ENCODE measurements at regions of chr16 and their contacts with region 1.

Region 1: DNA sequence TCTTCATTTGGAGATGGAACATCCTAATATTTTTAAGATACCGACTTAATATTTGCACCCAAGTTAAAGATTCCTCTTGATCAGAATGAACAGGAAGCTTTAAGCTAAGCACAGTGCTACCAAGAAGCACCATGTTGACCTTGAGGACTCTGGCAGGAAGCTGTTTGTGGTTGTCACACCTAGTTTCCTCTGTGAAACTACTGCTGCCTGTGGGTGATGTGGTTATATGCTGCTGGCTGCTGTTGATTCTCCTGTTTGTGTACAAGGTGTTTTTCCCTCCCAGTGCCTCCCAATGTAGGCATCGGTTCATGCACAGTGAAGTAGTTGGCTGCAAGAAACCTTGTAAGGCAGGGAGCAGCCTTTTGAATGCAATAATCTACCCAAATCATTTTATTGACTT is 23.4 kb downstream of the RBL2 start:
- DNase-seq: peak; percentile 58 to 94
- ATAC-seq: peak; percentile 68 to 88 (median 86)
- H3K4me3 ChIP-seq: peak overlapping the region; percentile 23
- H3K4me3 Mint-ChIP-seq: peak overlapping the region; percentile 93
- H3K27ac ChIP-seq: peak overlapping the region; percentile 53
- H3K27ac Mint-ChIP-seq: peak overlapping the region; percentile 88 to 91
- H3K4me1 ChIP-seq: peaks cover 38% of the 10 kb centered on the region
- H3K4me1 Mint-ChIP-seq: peaks cover 76 to 77% of the 10 kb centered on the region in 2 donors
- H3K27me3 ChIP-seq: no peaks in the 10 kb centered on the region
- H3K27me3 Mint-ChIP-seq: no peaks in the 10 kb centered on the region
- CTCF ChIP-seq: no peak

Region 2: DNA sequence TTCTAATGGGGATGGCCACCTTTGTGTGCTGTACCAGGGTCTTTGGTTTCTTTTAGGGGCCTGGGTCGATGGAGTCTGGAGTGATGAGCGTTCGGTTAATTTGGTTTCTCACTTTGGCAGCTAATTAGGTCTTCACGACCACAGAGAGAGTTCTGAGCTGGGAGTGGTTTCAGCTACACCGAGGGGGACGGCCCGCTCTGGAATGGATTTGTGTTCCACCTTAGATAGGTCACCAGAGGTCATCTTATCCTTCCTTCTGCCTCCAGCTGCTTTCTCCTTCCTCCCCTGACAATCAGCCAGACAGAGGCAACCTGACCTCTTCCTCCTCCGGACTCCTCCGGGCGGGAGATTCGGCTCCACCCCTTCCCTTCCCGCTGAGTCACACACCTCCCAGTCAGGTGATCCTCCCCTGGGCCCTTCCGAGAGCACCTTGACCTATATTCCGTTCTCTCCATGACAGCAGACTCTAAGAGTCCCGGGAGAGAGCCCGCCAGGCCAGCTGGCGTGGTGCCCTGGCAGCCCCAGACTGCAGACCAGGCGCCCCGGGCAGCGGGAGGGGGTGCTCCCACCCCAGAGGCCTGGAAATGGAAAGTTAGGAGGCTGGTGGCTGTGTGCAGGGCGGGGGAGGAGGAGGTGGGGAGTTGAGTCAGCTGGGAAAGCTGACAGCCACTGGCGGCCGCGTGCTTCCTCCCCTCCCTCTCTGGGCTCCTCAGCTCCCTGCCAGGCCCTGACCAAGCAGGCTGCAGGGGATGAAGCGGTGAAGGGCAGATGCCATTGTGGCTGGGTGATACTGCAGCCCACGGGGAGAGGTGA is 358.1 kb before region 1 on chr16:
- intact Hi-C with region 1: loop called (anchors 10 kb)
- DNase-seq: peak; percentile 39 to 75
- ATAC-seq: peak; percentile 60 to 79 (median 79)
- H3K4me3 ChIP-seq: peak overlapping the region; percentile 29
- H3K4me3 Mint-ChIP-seq: peak overlapping the region; percentile 86
- H3K27ac ChIP-seq: peak overlapping the region; percentile 72
- H3K27ac Mint-ChIP-seq: peak overlapping the region; percentile 84 to 96
- H3K4me1 ChIP-seq: peaks cover 35% of the 10 kb centered on the region
- H3K4me1 Mint-ChIP-seq: peaks cover 16 to 35% of the 10 kb centered on the region in 2 donors
- H3K27me3 ChIP-seq: no peaks in the 10 kb centered on the region
- H3K27me3 Mint-ChIP-seq: no peaks in the 10 kb centered on the region
- CTCF ChIP-seq: no peak

Region 3: GRCh38 chr16:53435066-53435688 is 22.5 kb before region 1 on chr16:
- intact Hi-C with region 1: loop called (anchors 1 kb)
- DNase-seq: peak; percentile 71 to 87
- ATAC-seq: peak; percentile 74 to 88 (median 78)
- H3K4me3 ChIP-seq: peak overlapping the region; percentile 88
- H3K4me3 Mint-ChIP-seq: peak overlapping the region; percentile 93
- H3K27ac ChIP-seq: peak overlapping the region; percentile 94
- H3K27ac Mint-ChIP-seq: peak overlapping the region; percentile 97 to 98
- H3K4me1 ChIP-seq: peaks cover 18% of the 10 kb centered on the region
- H3K4me1 Mint-ChIP-seq: peaks cover 25 to 34% of the 10 kb centered on the region in 2 donors
- H3K27me3 ChIP-seq: no peaks in the 10 kb centered on the region
- H3K27me3 Mint-ChIP-seq: no peaks in the 10 kb centered on the region
- CTCF ChIP-seq: no peak

Region 4: GRCh38 chr16:53445534-53445933 is 12.1 kb before region 1 on chr16:
- intact Hi-C with region 1: loop called (anchors 1 kb)
- DNase-seq: peak in 1 of 2 donors; percentile 28
- ATAC-seq: peak; percentile 85 to 91 (median 91)
- H3K4me3 ChIP-seq: peak overlapping the region; percentile 28
- H3K4me3 Mint-ChIP-seq: peak overlapping the region; percentile 72
- H3K27ac ChIP-seq: peak overlapping the region; percentile 65
- H3K27ac Mint-ChIP-seq: peak overlapping the region; percentile 75 to 86
- H3K4me1 ChIP-seq: peaks cover 21% of the 10 kb centered on the region
- H3K4me1 Mint-ChIP-seq: peaks cover 24 to 32% of the 10 kb centered on the region in 2 donors
- H3K27me3 ChIP-seq: no peaks in the 10 kb centered on the region
- H3K27me3 Mint-ChIP-seq: no peaks in the 10 kb centered on the region
- CTCF ChIP-seq: no peak

Region 5: DNA sequence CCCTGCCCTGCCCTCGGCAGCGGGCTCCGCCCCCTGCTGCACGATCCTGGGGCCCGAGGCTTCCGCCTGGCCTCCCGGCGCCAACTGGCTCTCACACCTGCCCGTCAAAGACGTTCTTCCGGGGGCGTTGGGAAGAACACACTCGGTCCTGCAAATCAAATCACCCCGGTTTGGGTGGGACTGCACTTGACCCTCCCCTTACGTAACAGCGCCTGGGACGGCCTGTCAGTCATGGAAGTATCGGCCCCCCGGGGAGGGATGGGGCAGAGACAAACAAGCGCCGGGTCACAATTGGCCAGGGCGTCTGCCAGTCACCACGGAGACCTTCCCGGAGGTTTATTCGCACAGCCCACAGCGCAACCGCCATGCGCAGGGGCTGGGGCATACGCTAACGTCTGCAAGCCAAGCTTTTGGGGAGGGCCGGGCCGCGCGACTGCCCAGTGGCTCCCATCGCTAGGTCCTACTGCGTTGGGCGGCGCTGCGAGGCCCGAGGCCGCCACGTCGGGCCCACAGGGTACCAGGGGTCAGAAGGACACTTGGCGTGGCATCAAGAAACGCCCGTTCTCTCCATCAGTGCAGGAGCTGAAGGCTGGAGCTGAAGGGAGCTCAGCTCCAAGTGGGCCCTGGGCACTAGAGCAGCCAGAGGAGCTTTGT is 45.7 kb after region 1 on chr16:
- intact Hi-C with region 1: loop called (anchors 2 kb)
- DNase-seq: peak; percentile 99 to 100
- ATAC-seq: peak; percentile 90 to 98 (median 91)
- H3K4me3 ChIP-seq: peak overlapping the region; percentile 73
- H3K4me3 Mint-ChIP-seq: peak overlapping the region; percentile 92
- H3K27ac ChIP-seq: peak overlapping the region; percentile 87
- H3K27ac Mint-ChIP-seq: peak overlapping the region; percentile 96
- H3K4me1 ChIP-seq: peaks cover 29% of the 10 kb centered on the region
- H3K4me1 Mint-ChIP-seq: peaks cover 41 to 44% of the 10 kb centered on the region in 2 donors
- H3K27me3 ChIP-seq: no peaks in the 10 kb centered on the region
- H3K27me3 Mint-ChIP-seq: no peaks in the 10 kb centered on the region
- CTCF ChIP-seq: no peak

Region 6: DNA sequence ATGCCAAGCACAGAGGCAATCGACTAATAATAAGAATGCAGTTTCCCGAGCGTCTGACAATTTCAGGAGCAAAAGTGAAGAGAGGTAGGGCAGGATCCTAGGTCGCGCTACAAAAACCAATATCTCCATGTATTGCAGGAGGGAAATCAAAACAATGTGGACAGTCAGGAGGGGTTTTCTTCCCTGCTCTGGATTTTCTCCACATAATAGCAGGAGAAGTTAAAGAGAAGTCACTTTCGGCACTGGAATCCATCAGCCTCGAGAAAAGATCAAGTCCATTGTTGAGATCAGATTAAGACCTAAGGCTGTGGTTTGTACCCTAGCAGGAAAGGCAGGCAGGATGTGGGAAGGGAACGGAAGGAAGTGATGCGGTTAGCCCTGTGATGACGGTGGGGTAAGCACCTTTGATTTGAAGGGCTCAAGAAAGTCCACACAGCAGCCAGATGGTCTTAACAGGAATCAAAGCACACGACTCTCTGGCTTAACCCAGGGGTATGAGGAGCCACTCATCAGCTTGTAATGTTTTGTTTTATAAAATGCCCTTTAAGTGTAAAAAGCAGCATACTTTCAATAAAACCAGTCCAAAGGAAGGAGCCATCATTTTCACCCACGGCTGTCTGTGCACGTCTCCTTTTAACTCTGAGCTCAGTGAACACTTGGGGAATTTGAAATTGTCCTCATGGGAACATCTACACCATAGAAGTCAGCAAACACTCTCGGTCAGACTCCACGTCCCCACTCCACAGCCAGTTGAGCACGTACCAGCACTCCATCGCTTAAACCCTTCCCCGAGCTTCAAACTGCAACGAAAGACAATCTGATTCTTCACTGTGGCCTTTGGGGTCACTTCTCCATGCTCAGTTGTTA is 61.1 kb after region 1 on chr16:
- intact Hi-C with region 1: loop called (anchors 1 kb)
- DNase-seq: peak; percentile 73 to 90
- ATAC-seq: peak; percentile 84 to 95 (median 91)
- H3K4me3 ChIP-seq: peak overlapping the region; percentile 17
- H3K4me3 Mint-ChIP-seq: peak overlapping the region; percentile 84
- H3K27ac ChIP-seq: peak overlapping the region; percentile 79
- H3K27ac Mint-ChIP-seq: peak overlapping the region; percentile 88 to 93
- H3K4me1 ChIP-seq: peaks cover 57% of the 10 kb centered on the region
- H3K4me1 Mint-ChIP-seq: peaks cover 58 to 65% of the 10 kb centered on the region in 2 donors
- H3K27me3 ChIP-seq: no peaks in the 10 kb centered on the region
- H3K27me3 Mint-ChIP-seq: peaks cover 10% of the 10 kb centered on the region in 2 donors
- CTCF ChIP-seq: no peak